Mammary epithelial cell (primary cell): ENCODE measurements at regions of chr3 and their contacts with region 1.

Region 1: DNA sequence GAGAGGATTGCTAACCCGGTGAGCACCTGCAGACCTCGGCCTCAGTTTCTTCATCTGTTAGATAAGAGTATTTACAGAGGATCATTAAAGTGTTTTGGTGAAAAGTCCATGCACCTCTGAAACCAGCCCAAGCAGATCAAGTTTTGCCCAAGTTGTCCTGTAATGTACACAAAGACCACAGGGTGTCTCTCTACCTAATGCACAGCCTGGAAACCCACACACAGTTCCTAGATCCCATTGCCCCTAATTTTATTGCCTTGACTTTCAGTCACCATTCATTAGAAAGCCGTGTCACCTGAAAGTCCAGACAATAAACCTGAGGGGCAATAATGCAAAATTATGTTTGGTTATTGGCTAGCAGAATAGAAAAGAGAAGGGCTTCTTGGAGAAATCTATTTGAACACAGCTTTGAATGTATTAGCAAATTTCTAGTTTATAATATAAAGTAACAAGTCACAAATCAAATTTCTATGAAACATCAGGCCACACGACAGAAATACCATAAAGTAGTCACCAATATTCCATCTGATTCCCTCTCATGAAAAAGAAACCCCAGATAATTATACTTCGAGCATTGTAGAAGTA is 161.3 kb upstream of the SLC2A2 start:
- DNase-seq: no peak
- H3K4me3 ChIP-seq: no peak overlapping the region
- H3K27ac ChIP-seq: no peak overlapping the region
- H3K4me1 ChIP-seq: no peaks in the 10 kb centered on the region
- H3K27me3 ChIP-seq: no peaks in the 10 kb centered on the region
- CTCF ChIP-seq: peak; percentile 53 to 78

Region 2: DNA sequence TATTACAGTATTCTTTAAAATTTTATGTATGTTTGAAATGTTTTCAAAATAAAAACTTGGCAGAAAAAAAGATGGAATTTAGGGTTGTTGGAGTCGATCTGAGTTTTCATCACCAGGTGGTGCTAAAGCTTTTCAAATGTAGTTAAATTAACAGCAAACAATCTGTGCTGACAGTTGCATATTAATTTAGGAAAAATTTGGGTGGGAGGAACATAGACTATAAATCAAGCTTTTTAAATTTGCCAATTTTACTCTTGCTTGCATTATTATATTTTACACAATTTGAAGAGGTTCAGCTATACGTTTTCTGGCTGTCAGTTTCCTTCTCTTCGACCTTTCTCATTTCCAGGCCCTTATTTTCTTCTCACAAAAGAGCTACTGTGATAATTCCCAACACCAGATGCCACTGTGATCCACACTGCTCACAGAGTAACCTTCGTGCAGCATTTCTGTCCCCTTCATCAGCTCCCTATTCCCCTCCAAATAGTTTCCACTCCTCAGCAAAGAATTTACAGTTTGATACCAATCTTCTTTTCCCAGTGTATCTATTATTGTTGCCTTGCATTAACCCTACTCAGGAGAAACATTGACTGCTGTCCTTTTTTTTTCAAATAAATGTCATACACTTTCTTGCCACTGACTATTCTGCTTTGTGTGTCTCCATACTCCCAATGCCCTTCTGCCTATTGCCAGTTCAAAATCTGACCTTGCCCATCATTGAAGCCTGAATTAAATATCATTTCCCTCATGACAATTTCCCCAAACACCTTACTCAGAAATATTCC is 226.0 kb before region 1 on chr3:
- CTCF ChIA-PET with region 1: no interaction called
- dilution Hi-C with region 1: no loop called
- in situ Hi-C with region 1: no loop called
- intact Hi-C with region 1: loop called (anchors 1 kb)
- DNase-seq: peak; percentile 12
- H3K4me3 ChIP-seq: no peak overlapping the region
- H3K27ac ChIP-seq: no peak overlapping the region
- H3K4me1 ChIP-seq: no peaks in the 10 kb centered on the region
- H3K27me3 ChIP-seq: no peaks in the 10 kb centered on the region
- CTCF ChIP-seq: peak; percentile 49 to 58

Region 3: DNA sequence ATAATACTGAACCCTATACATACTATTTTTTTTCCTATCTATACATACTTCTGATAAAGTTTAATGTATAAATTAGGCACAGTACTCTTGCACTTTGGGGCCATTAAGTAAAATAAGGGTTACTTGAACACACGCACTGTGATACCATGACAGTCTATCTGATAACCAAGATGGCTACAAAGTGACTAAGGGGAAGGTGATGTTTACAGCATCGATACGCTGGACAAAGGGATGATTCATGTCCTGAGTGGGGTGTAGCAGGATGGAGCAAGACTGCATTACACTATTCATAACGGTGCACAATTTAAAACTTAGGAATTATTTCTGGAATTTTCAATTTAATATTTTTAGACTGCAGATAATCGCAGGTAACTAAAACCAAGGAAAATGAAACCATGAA is 131.3 kb before region 1 on chr3:
- CTCF ChIA-PET with region 1: no interaction called
- dilution Hi-C with region 1: no loop called
- in situ Hi-C with region 1: no loop called
- intact Hi-C with region 1: no loop called
- DNase-seq: peak; percentile 19
- H3K4me3 ChIP-seq: no peak overlapping the region
- H3K27ac ChIP-seq: no peak overlapping the region
- H3K4me1 ChIP-seq: peaks cover 2% of the 10 kb centered on the region
- H3K27me3 ChIP-seq: no peaks in the 10 kb centered on the region
- CTCF ChIP-seq: no peak

Region 4: DNA sequence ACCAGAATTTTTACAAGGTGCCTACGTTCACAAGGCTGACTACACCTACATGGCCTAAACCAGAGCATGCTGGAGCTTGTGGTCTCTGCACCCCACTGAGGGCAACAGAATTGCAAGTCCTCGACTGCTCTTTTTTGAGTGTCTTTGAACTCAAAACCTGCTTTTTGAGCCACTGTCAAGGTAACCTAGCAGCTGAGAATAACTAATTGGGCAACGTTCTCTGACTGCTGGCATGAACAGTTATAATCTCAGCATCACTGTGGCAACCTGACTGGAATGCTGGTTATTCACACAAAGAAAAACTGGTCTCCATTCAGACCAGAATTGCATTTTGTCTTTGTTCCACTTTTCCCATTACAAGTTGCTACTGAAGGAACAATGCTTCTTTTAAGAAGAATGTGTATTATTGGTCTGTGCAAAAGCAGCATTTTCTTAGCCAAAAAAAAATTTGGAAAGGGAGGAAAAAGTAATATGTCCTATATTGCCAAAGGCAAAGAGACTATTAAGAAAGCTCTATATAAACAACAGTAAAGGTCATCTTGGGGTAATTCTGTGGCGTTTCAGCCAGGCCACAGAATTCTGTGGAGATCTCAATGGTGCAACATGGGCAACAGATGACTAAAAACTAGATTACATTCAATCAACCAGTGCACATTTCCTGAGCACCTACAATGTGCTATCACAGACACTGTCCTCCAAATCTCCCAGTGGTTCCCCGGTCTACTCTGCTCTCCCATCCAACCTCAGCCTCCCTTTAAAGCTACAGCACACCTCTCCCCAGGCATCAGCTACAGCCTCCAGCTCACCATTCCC is 195.6 kb after region 1 on chr3:
- CTCF ChIA-PET with region 1: no interaction called
- dilution Hi-C with region 1: no loop called
- in situ Hi-C with region 1: no loop called
- intact Hi-C with region 1: loop called (anchors 2 kb)
- DNase-seq: peak; percentile 57
- H3K4me3 ChIP-seq: no peak overlapping the region
- H3K27ac ChIP-seq: no peak overlapping the region
- H3K4me1 ChIP-seq: no peaks in the 10 kb centered on the region
- H3K27me3 ChIP-seq: no peaks in the 10 kb centered on the region
- CTCF ChIP-seq: no peak

Region 5: GRCh38 chr3:171566803-171567422 is 379.1 kb after region 1 on chr3:
- CTCF ChIA-PET with region 1: no interaction called
- dilution Hi-C with region 1: no loop called
- in situ Hi-C with region 1: loop called (anchors 10 kb)
- intact Hi-C with region 1: loop called (anchors 1 kb)
- DNase-seq: peak; percentile 25
- H3K4me3 ChIP-seq: no peak overlapping the region
- H3K27ac ChIP-seq: no peak overlapping the region
- H3K4me1 ChIP-seq: no peaks in the 10 kb centered on the region
- H3K27me3 ChIP-seq: no peaks in the 10 kb centered on the region
- CTCF ChIP-seq: peak; percentile 65 to 74